Thyroid gland (tissue), 4 donors: ENCODE measurements at regions of chr17 and their contacts with region 1.

Region 1: GRCh38 chr17:12545877-12546513 is 119.7 kb upstream of the MYOCD start:
- DNase-seq: peak; percentile 27 to 28
- H3K4me3 ChIP-seq: no peak overlapping the region
- H3K27ac ChIP-seq: no peak overlapping the region
- H3K4me1 ChIP-seq: no peaks in the 10 kb centered on the region
- H3K27me3 ChIP-seq: no peaks in the 10 kb centered on the region
- CTCF ChIP-seq: peak; percentile 21 to 81 (median 63)
- POLR2A ChIP-seq: no peak

Region 2: GRCh38 chr17:12472252-12473173 is 73.5 kb before region 1 on chr17:
- intact Hi-C with region 1: no loop called
- DNase-seq: no peak
- H3K4me3 ChIP-seq: no peak overlapping the region
- H3K27ac ChIP-seq: no peak overlapping the region
- H3K4me1 ChIP-seq: no peaks in the 10 kb centered on the region
- H3K27me3 ChIP-seq: no peaks in the 10 kb centered on the region
- CTCF ChIP-seq: no peak
- POLR2A ChIP-seq: no peak

Region 3: GRCh38 chr17:12485361-12485906 is 60.6 kb before region 1 on chr17:
- intact Hi-C with region 1: loop called (anchors 10 kb)
- DNase-seq: no peak
- H3K4me3 ChIP-seq: no peak overlapping the region
- H3K27ac ChIP-seq: no peak overlapping the region
- H3K4me1 ChIP-seq: peaks cover 0 to 3% of the 10 kb centered on the region in 2 donors
- H3K27me3 ChIP-seq: no peaks in the 10 kb centered on the region
- CTCF ChIP-seq: no peak
- POLR2A ChIP-seq: no peak

Region 4: GRCh38 chr17:12613566-12613965 is 67.6 kb after region 1 on chr17:
- intact Hi-C with region 1: loop called (anchors 10 kb)
- DNase-seq: no peak
- H3K4me3 ChIP-seq: no peak overlapping the region
- H3K27ac ChIP-seq: no peak overlapping the region
- H3K4me1 ChIP-seq: no peaks in the 10 kb centered on the region
- H3K27me3 ChIP-seq: no peaks in the 10 kb centered on the region
- CTCF ChIP-seq: no peak
- POLR2A ChIP-seq: no peak

Region 5: GRCh38 chr17:12667299-12667958 is 121.4 kb after region 1 on chr17:
- intact Hi-C with region 1: loop called (anchors 10 kb)
- DNase-seq: peak; percentile 8 to 17
- H3K4me3 ChIP-seq: no peak overlapping the region
- H3K27ac ChIP-seq: no peak overlapping the region
- H3K4me1 ChIP-seq: peaks cover 3 to 10% of the 10 kb centered on the region in 2 donors
- H3K27me3 ChIP-seq: peaks cover 3% of the 10 kb centered on the region
- CTCF ChIP-seq: peak in 4 of 6 experiments; percentile 33 to 68 (median 53)
- POLR2A ChIP-seq: no peak

Region 6: DNA sequence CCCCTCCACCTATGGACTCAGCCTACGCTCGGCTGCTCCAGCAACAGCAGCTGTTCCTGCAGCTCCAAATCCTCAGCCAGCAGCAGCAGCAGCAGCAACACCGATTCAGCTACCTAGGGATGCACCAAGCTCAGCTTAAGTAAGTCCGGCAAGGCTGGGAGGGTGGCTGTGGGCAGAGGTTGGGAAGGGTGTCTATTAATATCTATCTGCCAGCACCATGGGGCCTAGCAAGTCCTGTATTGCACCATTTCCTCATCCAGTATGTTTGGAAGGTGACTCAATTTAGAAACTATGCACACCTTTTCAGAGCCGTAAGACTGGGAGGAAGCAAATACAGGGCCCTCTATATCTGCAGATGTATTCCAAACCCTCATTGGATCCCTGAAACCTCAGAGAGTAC is 198.3 kb after region 1 on chr17:
- intact Hi-C with region 1: loop called (anchors 10 kb)
- DNase-seq: no peak
- H3K4me3 ChIP-seq: no peak overlapping the region
- H3K27ac ChIP-seq: no peak overlapping the region
- H3K4me1 ChIP-seq: peaks cover 0 to 4% of the 10 kb centered on the region in 2 donors
- H3K27me3 ChIP-seq: no peaks in the 10 kb centered on the region
- CTCF ChIP-seq: no peak
- POLR2A ChIP-seq: no peak

Region 7: DNA sequence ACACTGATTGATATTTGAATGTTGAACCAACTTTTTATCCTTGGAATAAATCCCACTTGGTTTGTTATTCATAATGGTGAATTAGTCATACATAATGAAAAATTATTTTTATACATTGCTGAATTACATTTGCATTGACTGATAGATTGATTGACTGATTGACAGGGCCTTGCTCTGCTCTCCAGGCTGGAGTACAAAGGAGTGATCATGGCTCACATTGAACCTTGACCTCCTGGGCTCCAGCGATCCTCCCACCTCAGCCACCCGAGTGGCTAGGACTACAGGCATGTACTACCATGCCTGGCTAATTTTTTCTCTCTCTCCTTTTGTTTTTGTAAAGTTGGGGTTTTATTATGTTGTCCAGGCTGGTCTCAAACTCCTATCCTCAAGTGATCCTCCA is 341.1 kb after region 1 on chr17:
- intact Hi-C with region 1: no loop called
- DNase-seq: no peak
- H3K4me3 ChIP-seq: no peak overlapping the region
- H3K27ac ChIP-seq: no peak overlapping the region
- H3K4me1 ChIP-seq: no peaks in the 10 kb centered on the region
- H3K27me3 ChIP-seq: no peaks in the 10 kb centered on the region
- CTCF ChIP-seq: no peak
- POLR2A ChIP-seq: no peak

Region 8: GRCh38 chr17:13002766-13003451 is 456.9 kb after region 1 on chr17:
- intact Hi-C with region 1: loop called (anchors 10 kb)
- DNase-seq: peak; percentile 90 to 93
- H3K4me3 ChIP-seq: no peak overlapping the region
- H3K27ac ChIP-seq: peak overlapping the region in 2 of 3 donors; percentile 38 to 67
- H3K4me1 ChIP-seq: peaks cover 16 to 20% of the 10 kb centered on the region in 2 donors
- H3K27me3 ChIP-seq: no peaks in the 10 kb centered on the region
- CTCF ChIP-seq: peak; percentile 78 to 87 (median 81)
- POLR2A ChIP-seq: no peak